ENCODE measurements at regions of chr22 and their contacts with region 1.

Region 1: GRCh38 chr22:46057762-46058420 is 80.9 kb upstream of the WNT7B start:
- DNase-seq: peak in 36 of 42 donors; percentile 3 to 82 (median 52)

Region 2: DNA sequence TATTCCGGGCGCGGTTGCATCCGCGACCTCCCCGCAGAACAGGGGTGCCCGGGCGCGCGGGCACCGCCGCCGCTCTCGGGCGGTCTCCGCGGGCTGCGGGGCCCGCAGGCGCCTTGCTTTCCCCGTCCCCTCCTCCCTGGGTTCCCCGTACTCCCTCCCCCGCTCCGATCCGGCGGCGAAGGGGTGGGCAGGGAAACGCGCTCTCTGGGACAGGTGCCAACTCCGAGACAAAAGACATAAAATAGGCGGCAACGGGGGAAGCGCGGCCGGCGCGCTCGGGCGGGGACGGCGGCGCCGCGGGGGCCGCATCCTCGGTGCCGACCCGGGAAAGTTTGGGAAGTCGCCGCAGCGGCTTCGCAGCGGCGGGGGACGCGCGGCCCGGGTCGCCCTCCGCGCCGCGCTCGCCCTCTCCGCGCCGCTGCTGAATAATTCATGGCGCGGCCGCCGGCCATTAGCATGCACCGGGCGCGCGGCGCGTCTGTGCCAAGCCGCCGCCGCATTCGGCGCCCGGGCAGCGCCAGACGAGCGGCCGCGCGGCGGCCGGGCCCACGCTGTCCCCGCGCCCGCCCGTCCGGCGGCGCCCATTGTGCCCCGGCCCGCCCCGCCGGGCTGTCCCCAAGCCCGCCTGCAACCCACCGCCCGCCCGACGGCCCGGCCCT is 13.7 kb after region 1 on chr22:
- intact Hi-C with region 1: loop called (anchors 2 kb)
- DNase-seq: peak; percentile 83 to 97 (median 94)

Region 3: DNA sequence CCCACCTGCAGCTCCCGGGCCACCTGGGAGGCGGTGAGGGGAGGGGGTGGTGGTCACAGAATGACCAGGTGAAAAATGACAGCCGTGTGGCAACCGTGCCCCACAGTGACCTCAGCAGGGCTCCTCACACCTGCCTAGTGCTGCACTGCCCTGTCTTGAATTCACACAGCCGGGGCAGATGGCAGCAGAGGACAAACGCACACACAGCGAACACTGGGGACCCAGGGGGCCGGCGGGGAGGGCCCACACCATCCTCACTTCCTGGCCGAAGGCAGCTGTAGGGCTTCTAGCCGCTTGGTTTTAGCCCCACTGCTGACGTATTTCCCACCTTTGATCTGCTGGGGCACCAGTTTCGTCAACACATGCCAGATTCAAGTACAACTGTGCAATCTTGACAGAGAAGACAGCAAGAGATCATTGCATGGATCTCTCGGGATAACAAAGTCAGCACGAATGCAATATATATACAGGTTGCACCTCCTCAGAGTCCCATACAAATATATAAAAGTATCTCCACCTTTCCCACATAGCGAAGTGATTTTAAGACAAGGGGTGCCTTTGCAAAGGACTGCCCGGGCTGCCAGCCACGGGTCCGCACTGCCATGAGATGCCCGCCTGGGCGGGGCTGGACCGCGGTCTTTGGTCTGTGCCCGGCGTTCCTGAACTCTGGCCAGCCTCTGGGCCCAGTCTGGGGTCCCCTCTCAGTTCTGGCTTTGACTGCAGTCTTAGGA is 304.5 kb after region 1 on chr22:
- intact Hi-C with region 1: no loop called
- DNase-seq: peak in 1 of 42 donors; percentile 31